Testis (tissue), 5 donors: ENCODE measurements at regions of chr1 and their contacts with region 1.

Region 1: GRCh38 chr1:115138968-115139367 is 49.7 kb upstream of the TSPAN2 start:
- DNase-seq: peak; percentile 94
- H3K4me3 ChIP-seq: no peak overlapping the region
- H3K27ac ChIP-seq: no peak overlapping the region
- H3K4me1 ChIP-seq: peaks cover 4% of the 10 kb centered on the region
- H3K27me3 ChIP-seq: no peaks in the 10 kb centered on the region
- CTCF ChIP-seq: peak; percentile 81 to 84 (median 82)
- POLR2A ChIP-seq: no peak

Region 2: DNA sequence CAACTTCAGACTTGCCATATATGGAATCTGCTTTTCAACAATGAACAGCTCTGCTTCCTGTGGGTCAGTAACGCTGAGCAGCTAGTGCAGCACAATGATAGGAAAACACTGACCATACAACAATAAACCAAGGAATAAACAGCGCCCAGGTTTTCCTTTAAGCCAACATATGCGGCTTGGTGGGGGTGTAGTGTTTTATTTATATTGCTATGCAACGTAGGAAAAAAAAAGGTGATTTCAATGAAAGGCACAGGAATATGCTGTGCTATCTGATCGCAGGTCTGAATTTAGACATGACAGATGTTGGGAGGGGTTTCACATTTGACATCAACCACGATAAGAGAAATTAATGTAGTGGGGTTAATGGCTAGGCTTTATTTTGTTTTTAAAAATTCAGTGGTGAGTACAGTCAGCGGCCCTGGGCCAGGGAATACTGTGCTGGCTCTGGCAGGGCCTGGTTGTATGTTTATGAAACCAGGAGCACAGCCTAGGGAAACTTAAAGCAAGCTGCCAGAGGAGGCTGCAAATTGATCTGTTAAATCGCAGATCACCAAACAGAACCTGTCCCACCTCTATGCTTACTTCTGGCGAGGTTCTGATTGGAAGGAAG is 54.0 kb before region 1 on chr1:
- intact Hi-C with region 1: no loop called
- DNase-seq: no peak
- H3K4me3 ChIP-seq: no peak overlapping the region
- H3K27ac ChIP-seq: no peak overlapping the region
- H3K4me1 ChIP-seq: no peaks in the 10 kb centered on the region
- H3K27me3 ChIP-seq: no peaks in the 10 kb centered on the region
- CTCF ChIP-seq: no peak
- POLR2A ChIP-seq: no peak

Region 3: DNA sequence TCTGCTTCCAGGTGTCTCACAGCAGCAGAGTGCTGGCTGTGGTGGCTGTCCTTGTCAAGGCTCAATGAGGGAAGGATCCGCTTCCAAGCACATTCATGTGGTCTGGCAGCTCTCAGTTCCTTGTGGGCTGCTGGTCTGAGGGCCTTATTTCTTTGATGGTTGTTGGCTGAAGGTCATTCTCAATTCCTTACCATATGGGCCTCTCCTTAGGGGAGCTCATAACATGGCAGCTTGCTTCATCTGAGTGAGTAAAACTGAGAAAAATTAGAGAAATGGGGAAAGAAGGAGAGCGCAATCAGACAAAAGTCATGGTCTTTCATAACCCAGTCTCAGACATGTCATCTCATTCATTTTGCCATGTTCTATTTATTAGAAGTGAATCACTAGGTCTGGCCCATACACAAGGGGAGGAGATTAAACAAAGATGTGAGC is 32.0 kb after region 1 on chr1:
- intact Hi-C with region 1: no loop called
- DNase-seq: no peak
- H3K4me3 ChIP-seq: no peak overlapping the region
- H3K27ac ChIP-seq: no peak overlapping the region
- H3K4me1 ChIP-seq: no peaks in the 10 kb centered on the region
- H3K27me3 ChIP-seq: no peaks in the 10 kb centered on the region
- CTCF ChIP-seq: no peak
- POLR2A ChIP-seq: no peak

Region 4: GRCh38 chr1:115469703-115470476 is 330.9 kb after region 1 on chr1:
- intact Hi-C with region 1: loop called (anchors 10 kb)
- DNase-seq: peak; percentile 64
- H3K4me3 ChIP-seq: no peak overlapping the region
- H3K27ac ChIP-seq: no peak overlapping the region
- H3K4me1 ChIP-seq: no peaks in the 10 kb centered on the region
- H3K27me3 ChIP-seq: no peaks in the 10 kb centered on the region
- CTCF ChIP-seq: peak; percentile 53 to 87 (median 79)
- POLR2A ChIP-seq: no peak

Region 5: GRCh38 chr1:115595279-115596079 is 456.5 kb after region 1 on chr1:
- intact Hi-C with region 1: loop called (anchors 10 kb)
- DNase-seq: peak; percentile 94
- H3K4me3 ChIP-seq: no peak overlapping the region
- H3K27ac ChIP-seq: no peak overlapping the region
- H3K4me1 ChIP-seq: peaks cover 7% of the 10 kb centered on the region
- H3K27me3 ChIP-seq: no peaks in the 10 kb centered on the region
- CTCF ChIP-seq: peak; percentile 84 to 88 (median 88)
- POLR2A ChIP-seq: no peak